ENCODE measurements at regions of chr17 and their contacts with region 1.

Region 1: GRCh38 chr17:81315129-81315884 is 20.2 kb upstream of the SLC38A10 start:
- DNase-seq: no peak
- H3K4me3 ChIP-seq: no peak overlapping the region
- H3K27ac ChIP-seq: no peak overlapping the region
- H3K4me1 ChIP-seq: peaks cover under 1% of the 10 kb centered on the region
- H3K27me3 ChIP-seq: no peaks in the 10 kb centered on the region
- CTCF ChIP-seq: no peak

Region 2: DNA sequence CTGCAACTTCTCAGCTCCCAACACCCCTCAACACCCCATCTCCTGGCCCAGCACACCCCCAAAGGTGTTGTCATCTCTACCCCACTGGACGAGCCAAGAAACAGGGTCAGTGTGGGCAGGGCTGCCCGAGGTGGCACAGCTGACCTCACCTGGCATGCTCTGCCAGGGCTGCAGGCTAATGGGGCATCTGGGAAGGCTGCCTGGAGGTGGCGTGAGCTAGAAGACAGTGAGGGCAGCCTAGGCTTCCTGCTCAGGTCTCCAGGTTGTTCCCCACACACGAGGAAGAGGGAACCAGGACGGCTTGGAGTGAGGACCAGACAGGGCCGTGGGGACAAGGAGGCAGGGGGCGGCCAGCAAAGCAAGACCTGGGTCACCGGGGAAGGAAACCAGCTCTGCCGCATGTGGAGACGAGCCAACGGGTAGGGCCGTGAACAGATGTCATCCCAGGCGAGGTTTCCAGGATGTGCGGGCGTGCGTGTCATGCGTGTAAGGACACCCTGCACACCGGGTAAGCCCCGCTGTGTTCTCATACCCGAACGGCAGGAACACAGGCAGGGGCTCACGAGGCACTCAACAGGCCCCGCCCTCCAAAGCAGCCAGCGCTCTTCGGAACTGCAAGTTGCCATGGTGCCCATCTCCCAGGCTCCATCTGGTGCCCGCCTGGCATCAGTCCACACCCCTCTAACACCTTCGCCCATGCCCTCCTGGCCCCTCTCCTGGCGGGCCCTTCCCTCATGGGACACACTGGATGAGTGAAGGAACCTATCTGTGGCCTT is 179.6 kb before region 1 on chr17:
- CTCF ChIA-PET with region 1: no interaction called
- dilution Hi-C with region 1: no loop called
- in situ Hi-C with region 1: no loop called
- intact Hi-C with region 1: no loop called
- DNase-seq: no peak
- H3K4me3 ChIP-seq: no peak overlapping the region
- H3K27ac ChIP-seq: no peak overlapping the region
- H3K4me1 ChIP-seq: no peaks in the 10 kb centered on the region
- H3K27me3 ChIP-seq: no peaks in the 10 kb centered on the region
- CTCF ChIP-seq: no peak

Region 3: DNA sequence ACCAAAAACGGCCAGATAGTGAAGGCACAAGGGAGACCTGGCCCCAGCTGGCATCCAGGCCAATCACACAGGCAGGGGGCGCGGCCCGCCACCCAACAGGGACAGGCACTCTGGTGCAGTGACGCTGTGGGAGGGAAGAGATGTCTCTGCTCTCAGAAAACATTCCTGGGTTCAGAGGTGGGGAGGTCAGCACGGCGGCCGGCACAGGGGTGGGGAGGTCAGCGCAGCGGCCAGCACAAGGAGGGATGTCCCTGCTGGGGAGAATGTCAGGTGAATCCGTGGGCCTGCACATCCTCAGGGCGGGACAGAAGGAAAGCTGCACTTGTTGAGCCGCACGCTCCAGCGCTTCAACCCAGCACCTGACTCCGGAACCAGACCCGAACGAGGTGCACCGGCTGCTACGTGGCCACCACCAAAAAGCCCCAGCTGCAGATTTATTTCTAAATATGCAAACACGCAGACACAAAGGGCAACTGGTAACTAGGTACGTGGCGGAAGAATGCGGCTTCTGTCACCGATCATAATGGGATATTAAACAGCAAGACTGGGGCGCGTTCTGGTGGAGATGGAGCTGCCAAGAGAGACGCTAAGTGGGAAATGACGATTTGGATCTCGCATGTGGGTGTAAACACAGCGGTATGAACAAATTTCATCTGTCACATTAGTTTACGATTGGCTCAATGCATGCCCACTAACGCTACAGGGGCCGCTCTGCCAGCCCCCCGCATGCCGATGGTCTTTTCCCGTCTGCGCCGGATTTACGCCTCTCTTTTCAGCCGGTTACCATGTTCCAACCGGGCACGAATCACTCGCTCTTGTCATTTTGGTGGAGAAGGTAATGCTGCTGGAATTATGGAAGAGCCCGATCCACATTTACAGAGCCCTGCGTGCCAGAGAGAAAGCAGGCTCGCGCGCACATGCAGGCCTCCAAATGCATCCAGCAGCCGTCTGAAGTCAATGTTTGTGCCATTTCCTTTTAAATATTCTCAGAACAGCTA is 35.7 kb before region 1 on chr17:
- CTCF ChIA-PET with region 1: no interaction called
- dilution Hi-C with region 1: loop called (anchors 5 kb)
- in situ Hi-C with region 1: no loop called
- intact Hi-C with region 1: no loop called
- DNase-seq: no peak
- H3K4me3 ChIP-seq: no peak overlapping the region
- H3K27ac ChIP-seq: no peak overlapping the region
- H3K4me1 ChIP-seq: no peaks in the 10 kb centered on the region
- H3K27me3 ChIP-seq: no peaks in the 10 kb centered on the region
- CTCF ChIP-seq: no peak

Region 4: GRCh38 chr17:81354954-81355347 is 39.6 kb after region 1 on chr17:
- CTCF ChIA-PET with region 1: no interaction called
- dilution Hi-C with region 1: loop called (anchors 5 kb)
- in situ Hi-C with region 1: no loop called
- intact Hi-C with region 1: no loop called
- DNase-seq: no peak
- H3K4me3 ChIP-seq: no peak overlapping the region
- H3K27ac ChIP-seq: no peak overlapping the region
- H3K4me1 ChIP-seq: no peaks in the 10 kb centered on the region
- H3K27me3 ChIP-seq: no peaks in the 10 kb centered on the region
- CTCF ChIP-seq: no peak

Measured in mammary epithelial cell (primary cell).